ENCODE measurements at regions of chr6 and their contacts with region 1.

Region 1: DNA sequence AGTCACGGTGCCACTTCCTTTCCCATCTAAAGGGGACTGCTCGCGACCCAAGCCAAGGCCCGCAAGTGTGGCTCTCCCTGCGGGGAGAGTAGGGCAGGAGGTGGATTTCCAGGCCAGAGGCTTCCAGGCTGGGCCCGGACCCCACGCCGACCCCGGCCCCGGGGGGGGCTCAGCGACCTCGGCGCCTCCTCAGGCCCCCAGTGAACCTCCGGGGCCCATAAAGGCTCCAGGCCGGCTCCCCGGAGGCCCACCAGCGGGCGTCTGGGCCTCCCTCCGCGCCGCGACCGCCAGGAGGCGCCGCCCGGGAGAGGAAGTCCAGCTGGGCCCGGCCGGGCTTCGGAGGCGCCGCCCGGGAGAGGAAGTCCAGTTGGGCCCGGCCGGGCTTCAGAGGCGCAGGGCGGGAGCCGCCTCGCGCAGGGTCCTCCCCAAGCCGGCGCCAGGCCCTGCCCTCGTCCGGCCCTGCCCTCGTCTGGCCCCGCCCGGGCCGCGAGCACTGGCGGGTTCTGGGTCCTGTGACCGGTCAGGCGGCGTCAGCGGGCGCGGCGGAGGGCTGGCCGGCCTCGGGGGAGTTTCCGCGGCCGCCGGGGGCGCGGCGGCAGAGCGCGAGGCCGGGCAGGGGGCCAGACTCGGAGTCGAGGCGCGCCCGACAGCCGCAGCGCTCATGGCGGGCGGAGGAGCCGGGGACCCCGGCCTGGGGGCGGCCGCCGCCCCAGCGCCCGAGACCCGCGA is at the start of gene RAB32:
- DNase-seq: peak; percentile 85
- H3K4me3 ChIP-seq: peak within 1 kb of the TSS; percentile 65 to 73
- H3K27ac ChIP-seq: peak within 1 kb of the TSS; percentile 86 to 90
- H3K4me1 ChIP-seq: no peaks in the 10 kb centered on the region
- H3K27me3 ChIP-seq: no peaks in the 10 kb centered on the region
- CTCF ChIP-seq: peak; percentile 38 to 79 (median 67)
- POLR2A ChIP-seq: peak; percentile 60
- total RNA-seq, gene RAB32: 6.3 to 26.2 TPM

Region 2: GRCh38 chr6:145814501-145815308 is 728.7 kb before region 1 on chr6 and contains the start of gene FBXO30:
- intact Hi-C with region 1: loop called (anchors 5 kb)
- DNase-seq: peak; percentile 80
- H3K4me3 ChIP-seq: peak within 1 kb of the TSS; percentile 58 to 67
- H3K27ac ChIP-seq: peak within 1 kb of the TSS; percentile 79 to 87
- H3K4me1 ChIP-seq: no peaks in the 10 kb centered on the region
- H3K27me3 ChIP-seq: no peaks in the 10 kb centered on the region
- CTCF ChIP-seq: peak in 1 of 4 experiments; percentile 22
- POLR2A ChIP-seq: peak; percentile 78
- total RNA-seq, gene FBXO30: 6.5 to 9.6 TPM

Region 3: GRCh38 chr6:145963216-145964068 is 579.9 kb before region 1 on chr6:
- intact Hi-C with region 1: loop called (anchors 10 kb)
- DNase-seq: peak; percentile 21
- H3K4me3 ChIP-seq: peak overlapping the region; percentile 69 to 75
- H3K27ac ChIP-seq: peak overlapping the region; percentile 81
- H3K4me1 ChIP-seq: no peaks in the 10 kb centered on the region
- H3K27me3 ChIP-seq: no peaks in the 10 kb centered on the region
- CTCF ChIP-seq: no peak
- POLR2A ChIP-seq: no peak

Region 4: DNA sequence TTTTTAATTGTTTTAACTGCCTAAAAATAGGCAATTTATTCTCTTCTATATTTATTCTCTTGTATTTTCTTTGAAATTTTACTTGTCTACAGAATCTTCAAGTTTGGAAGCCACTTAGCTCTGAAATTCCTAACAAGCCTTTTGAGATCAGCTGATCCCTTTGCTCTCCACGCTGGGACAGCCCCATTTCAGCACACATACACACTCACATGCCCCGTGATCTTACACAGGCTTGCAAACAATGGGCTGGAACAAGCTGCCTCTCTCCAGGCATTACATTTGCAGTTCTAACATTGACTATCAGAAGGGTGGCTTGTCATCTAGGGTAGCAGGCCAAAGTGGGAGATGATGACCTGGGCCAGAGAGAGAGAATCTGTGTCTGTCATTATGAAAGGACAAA is 61.8 kb before region 1 on chr6:
- intact Hi-C with region 1: no loop called
- DNase-seq: no peak
- H3K4me3 ChIP-seq: no peak overlapping the region
- H3K27ac ChIP-seq: no peak overlapping the region
- H3K4me1 ChIP-seq: no peaks in the 10 kb centered on the region
- H3K27me3 ChIP-seq: no peaks in the 10 kb centered on the region
- CTCF ChIP-seq: no peak
- POLR2A ChIP-seq: no peak

Region 5: DNA sequence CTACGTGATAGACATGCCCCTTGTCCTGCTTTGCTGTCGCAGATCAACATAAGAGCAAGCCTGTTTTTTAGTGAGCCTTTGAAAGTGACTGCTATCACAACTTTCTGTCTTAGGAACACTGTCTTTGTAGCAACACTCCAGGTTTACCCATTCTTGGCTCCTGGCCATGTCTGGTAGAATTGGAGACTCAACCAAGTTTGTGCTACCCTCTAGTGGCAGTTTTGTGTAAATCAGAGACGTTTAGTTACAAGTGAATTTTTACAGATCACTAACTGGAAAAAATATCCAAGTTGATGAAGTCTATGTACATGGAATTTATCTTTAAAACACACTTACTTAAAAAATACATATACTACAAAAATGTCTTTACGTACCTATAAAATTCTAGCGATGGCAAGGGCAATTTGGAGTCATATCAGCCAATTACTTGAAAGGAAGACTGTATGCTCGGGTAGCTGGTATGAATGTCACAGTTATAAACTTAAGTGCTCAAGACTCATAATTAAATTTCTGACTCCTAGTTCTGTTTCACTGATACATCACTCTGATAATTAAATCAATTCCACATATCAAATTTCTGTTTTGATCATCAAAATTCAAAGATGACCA is 156.8 kb after region 1 on chr6:
- intact Hi-C with region 1: loop called (anchors 2 kb)
- DNase-seq: peak; percentile 82
- H3K4me3 ChIP-seq: no peak overlapping the region
- H3K27ac ChIP-seq: no peak overlapping the region
- H3K4me1 ChIP-seq: no peaks in the 10 kb centered on the region
- H3K27me3 ChIP-seq: no peaks in the 10 kb centered on the region
- CTCF ChIP-seq: peak; percentile 40 to 73 (median 68)
- POLR2A ChIP-seq: no peak

Region 6: DNA sequence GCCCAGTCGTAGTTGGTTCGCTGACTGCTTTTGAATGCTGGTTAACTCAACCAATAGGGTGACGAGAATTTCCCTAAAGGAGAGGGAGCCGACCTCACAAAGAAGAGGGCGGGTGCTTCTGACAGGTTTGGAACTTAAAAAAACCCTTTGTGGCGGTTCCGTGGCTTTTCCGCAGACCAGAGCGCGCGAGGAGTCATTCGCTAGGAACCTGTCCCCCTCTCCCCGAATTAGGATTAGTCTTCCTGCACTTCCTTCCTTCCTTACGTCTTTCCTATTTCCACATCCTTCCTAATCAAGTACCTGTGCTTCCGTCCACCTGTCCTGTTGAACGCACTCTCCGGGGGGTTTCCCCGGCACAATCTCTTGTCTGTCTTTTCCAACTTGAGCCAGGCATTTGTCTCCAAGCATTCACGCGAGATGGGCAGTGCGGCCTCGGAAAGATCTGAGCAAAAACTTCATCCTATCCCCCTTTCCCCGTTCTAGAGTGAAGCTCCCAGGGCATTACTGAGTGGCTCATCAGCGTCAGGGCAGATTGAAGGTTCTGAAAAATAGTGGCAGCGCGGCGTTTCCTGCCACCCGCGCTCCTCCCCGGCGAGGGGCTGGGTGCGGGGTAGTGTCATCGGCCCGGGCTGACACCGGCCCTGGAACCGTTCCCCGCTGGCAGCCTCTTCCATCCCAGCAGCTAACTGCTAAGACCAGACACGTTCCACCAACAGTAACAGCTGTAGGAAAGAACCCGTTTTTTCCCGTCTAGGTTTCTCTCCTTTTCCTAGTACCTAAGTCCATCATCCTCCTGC is 659.3 kb after region 1 on chr6:
- intact Hi-C with region 1: loop called (anchors 10 kb)
- DNase-seq: peak; percentile 94
- H3K4me3 ChIP-seq: peak overlapping the region; percentile 82 to 90
- H3K27ac ChIP-seq: peak overlapping the region; percentile 94 to 95
- H3K4me1 ChIP-seq: no peaks in the 10 kb centered on the region
- H3K27me3 ChIP-seq: no peaks in the 10 kb centered on the region
- CTCF ChIP-seq: no peak
- POLR2A ChIP-seq: peak; percentile 83

Measured in prostate gland (tissue), 2 donors.